Heart right ventricle (tissue), 16 donors: ENCODE measurements at regions of chr13 and their contacts with region 1.

Region 1: GRCh38 chr13:33169273-33169980 is 116.1 kb downstream of the STARD13 start:
- DNase-seq: no peak
- ATAC-seq: no peak
- H3K4me3 ChIP-seq: no peak overlapping the region
- H3K27ac ChIP-seq: peak overlapping the region in 8 of 10 donors; percentile 23 to 65 (median 40)
- H3K4me1 ChIP-seq: peaks cover 6 to 68% (median 34%) of the 10 kb centered on the region in 9 donors
- H3K27me3 ChIP-seq: no peaks in the 10 kb centered on the region
- CTCF ChIP-seq: no peak

Region 2: DNA sequence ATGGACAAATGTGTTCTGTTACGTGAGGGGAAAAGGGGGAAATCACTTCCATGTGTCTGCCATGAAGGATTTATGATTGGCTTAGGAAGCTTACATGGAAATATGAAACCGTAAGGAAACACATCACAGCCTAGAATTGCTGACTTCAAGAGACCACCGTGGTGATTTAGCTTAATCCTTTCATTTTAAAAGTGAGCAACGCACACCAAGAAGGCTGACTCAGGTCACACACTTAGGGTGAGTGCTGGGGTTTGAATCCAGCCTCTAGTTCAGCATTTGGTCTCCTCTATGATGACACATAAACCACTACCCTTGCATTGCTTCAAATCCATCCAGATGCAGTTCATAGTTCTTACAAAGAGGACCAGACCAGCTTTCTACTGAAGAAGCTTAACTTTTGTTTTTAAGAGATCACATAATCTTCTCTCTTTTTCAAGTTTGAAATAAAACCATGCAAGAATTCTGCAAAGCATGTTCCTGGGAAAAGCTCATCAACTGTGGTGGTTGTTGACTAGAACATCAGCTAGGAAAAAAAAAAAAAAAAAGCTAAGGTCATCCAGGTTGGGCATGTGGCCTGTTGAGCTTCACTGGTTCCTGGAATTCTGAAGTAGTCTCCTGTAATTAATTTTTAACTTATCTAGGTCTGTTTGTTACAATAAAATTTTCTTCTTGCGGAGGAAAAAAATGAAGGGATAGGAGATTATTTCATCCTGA is 213.4 kb before region 1 on chr13:
- intact Hi-C with region 1: no loop called
- DNase-seq: no peak
- ATAC-seq: no peak
- H3K4me3 ChIP-seq: no peak overlapping the region
- H3K27ac ChIP-seq: no peak overlapping the region
- H3K4me1 ChIP-seq: no peaks in the 10 kb centered on the region
- H3K27me3 ChIP-seq: no peaks in the 10 kb centered on the region
- CTCF ChIP-seq: no peak

Region 3: DNA sequence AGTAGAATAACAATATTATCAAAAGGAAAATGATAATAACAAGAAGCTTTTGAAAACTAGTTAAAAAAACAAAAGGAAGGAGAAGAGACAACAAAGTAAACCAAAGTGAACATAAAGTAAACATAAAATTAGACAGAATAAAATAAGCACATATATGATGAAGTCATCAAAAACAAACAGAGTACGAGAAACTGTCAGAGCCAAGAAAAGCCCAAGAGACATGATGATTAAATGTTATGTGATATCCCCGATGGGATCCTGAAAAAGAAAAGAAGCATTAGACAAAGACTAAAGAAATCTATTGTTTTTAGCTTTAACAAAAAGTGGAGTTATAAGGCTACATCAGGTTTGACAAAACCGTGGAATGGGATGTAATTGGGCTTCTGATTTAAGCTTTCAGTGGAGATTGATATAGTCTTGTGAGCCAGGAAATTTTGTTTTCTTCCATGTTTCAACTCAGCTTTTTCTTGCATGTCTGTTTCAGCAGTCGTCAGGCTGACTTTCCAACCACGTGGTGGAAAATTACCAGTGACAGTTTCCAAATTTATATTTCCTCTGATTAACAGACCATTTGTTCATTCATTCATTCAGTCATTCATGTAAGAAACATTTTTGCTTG is 88.3 kb before region 1 on chr13:
- intact Hi-C with region 1: no loop called
- DNase-seq: no peak
- ATAC-seq: no peak
- H3K4me3 ChIP-seq: no peak overlapping the region
- H3K27ac ChIP-seq: no peak overlapping the region
- H3K4me1 ChIP-seq: peaks cover 0 to 11% (median 0%) of the 10 kb centered on the region in 9 donors
- H3K27me3 ChIP-seq: no peaks in the 10 kb centered on the region
- CTCF ChIP-seq: no peak

Region 4: DNA sequence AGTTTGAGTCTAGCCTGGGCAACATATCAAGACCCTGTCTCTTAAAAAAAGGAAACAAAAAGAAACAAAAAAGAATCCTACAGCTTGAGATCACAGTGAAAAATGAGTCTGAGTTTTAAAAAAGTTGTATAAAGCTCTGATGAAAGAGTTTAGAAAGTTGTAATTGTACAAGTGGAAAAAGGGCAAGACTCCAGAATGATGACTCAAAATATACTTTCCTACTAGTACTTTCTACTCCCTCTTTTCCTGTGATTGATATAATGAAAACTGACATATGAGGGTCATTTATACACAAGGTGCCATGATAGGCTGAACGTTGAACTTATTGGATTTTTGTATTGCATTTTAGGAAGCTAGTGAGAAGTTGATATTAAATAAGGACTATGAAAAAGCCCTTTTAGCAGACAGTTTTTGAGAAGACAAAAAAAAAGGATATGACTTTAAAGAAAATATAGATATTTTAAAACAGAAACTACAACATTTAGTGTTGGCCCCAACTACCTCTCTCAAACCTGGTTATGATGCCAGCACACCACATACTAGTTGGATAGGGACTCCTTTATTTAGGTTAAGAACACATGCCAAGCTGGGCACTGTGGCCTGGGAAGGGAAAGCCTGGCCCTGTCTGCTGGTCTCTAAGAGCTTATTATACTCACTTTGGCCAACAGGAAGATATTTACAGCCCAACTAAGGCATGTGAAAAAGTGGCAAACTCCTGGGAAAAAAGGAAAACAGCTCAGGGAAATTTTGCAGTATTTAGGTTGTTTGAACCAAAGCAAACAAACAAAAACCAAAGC is 36.6 kb before region 1 on chr13:
- intact Hi-C with region 1: loop called in 2 of 10 experiments (anchors 5 kb)
- DNase-seq: no peak
- ATAC-seq: no peak
- H3K4me3 ChIP-seq: no peak overlapping the region
- H3K27ac ChIP-seq: peak overlapping the region in 1 of 10 donors; percentile 14
- H3K4me1 ChIP-seq: peaks cover 0 to 48% (median 35%) of the 10 kb centered on the region in 9 donors
- H3K27me3 ChIP-seq: no peaks in the 10 kb centered on the region
- CTCF ChIP-seq: no peak

Region 5: GRCh38 chr13:33204130-33204927 is 34.9 kb after region 1 on chr13:
- intact Hi-C with region 1: loop called in 1 of 10 experiments (anchors 5 kb)
- DNase-seq: peak; percentile 50 to 87
- ATAC-seq: peak; percentile 73 to 89 (median 82)
- H3K4me3 ChIP-seq: peak overlapping the region in 9 of 10 donors; percentile 21 to 54 (median 44)
- H3K27ac ChIP-seq: peak overlapping the region; percentile 54 to 87 (median 80)
- H3K4me1 ChIP-seq: peaks cover 27 to 99% (median 82%) of the 10 kb centered on the region in 9 donors
- H3K27me3 ChIP-seq: no peaks in the 10 kb centered on the region
- CTCF ChIP-seq: no peak

Region 6: DNA sequence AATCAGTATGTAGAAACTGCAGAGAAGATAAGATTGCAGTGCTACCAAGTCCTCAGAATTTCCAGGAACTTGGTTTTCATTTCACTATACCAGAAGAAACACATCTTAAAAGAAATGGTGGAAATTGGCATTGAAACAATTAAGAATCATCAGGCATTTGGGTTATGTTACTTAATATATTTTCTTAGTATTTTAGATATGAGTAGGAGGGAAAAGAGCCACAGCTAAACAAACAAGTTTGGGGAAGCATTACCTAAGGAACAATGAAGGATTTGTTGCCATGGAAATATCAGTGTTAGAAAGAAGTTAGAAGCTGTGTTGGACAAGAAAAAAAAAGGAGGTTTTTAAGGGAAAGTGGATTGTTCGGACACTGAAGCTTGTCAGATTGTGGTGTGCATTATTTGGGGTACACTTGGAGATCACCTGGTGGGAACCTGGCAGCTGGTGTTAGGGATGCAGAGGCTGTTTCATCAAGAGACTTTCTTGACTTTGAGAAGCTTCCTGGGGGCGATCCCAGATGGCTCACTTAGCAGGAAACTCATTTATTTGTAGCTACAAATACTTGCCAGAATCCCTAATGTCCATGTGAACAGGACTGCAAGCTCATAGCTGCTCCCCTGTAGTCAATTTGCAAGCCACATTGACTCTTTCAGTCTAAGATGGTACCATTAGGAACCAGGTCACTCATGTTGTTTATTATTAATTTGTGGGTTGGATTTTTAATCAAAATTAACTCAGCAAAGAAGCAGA is 895.2 kb after region 1 on chr13:
- intact Hi-C with region 1: no loop called
- DNase-seq: no peak
- ATAC-seq: no peak
- H3K4me3 ChIP-seq: no peak overlapping the region
- H3K27ac ChIP-seq: no peak overlapping the region
- H3K4me1 ChIP-seq: peaks cover 0 to 5% (median 0%) of the 10 kb centered on the region in 9 donors
- H3K27me3 ChIP-seq: no peaks in the 10 kb centered on the region
- CTCF ChIP-seq: no peak